ENCODE measurements at regions of chr5 and their contacts with region 1.

Region 1: DNA sequence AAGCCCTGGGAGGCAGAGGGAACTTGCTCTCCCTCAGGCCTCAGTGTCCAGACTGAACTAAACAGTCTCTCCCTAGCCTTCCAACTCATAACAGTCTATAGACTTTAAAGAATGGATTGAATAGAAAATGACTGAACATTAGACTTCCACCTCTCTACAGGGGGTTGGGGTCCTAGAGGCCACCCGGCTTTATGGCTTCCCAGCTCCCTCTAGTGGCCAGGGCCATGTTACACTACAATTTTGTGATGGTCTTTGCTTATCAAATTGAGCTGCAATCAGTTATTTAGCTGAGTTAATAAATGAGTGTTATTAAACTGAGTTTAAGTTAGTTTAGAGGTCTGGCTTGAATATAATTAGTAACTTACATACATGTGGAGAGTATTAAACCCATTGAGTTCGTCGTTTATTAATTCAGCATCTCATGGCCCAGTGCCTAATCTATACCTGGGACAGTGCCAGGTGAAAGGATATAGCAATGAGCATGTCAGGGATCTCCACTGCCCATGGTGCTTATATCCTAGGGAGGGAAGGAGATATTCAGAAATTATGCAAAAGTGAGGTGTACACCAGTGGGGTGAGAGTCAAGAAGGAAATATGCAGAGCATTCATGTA is 105.2 kb downstream of the SH3TC2 start:
- DNase-seq: peak; percentile 76
- H3K4me3 ChIP-seq: no peak overlapping the region
- H3K27ac ChIP-seq: no peak overlapping the region
- H3K4me1 ChIP-seq: no peaks in the 10 kb centered on the region
- CTCF ChIP-seq: peak; percentile 100

Region 2: GRCh38 chr5:148740966-148741742 is 216.5 kb before region 1 on chr5:
- CTCF ChIA-PET with region 1: interaction called, 32 read pairs
- POLR2A ChIA-PET with region 1: interaction called, 7 read pairs
- intact Hi-C with region 1: loop called (anchors 1 kb)
- DNase-seq: peak; percentile 58
- H3K4me3 ChIP-seq: no peak overlapping the region
- H3K27ac ChIP-seq: no peak overlapping the region
- H3K4me1 ChIP-seq: no peaks in the 10 kb centered on the region
- CTCF ChIP-seq: peak; percentile 96

Region 3: DNA sequence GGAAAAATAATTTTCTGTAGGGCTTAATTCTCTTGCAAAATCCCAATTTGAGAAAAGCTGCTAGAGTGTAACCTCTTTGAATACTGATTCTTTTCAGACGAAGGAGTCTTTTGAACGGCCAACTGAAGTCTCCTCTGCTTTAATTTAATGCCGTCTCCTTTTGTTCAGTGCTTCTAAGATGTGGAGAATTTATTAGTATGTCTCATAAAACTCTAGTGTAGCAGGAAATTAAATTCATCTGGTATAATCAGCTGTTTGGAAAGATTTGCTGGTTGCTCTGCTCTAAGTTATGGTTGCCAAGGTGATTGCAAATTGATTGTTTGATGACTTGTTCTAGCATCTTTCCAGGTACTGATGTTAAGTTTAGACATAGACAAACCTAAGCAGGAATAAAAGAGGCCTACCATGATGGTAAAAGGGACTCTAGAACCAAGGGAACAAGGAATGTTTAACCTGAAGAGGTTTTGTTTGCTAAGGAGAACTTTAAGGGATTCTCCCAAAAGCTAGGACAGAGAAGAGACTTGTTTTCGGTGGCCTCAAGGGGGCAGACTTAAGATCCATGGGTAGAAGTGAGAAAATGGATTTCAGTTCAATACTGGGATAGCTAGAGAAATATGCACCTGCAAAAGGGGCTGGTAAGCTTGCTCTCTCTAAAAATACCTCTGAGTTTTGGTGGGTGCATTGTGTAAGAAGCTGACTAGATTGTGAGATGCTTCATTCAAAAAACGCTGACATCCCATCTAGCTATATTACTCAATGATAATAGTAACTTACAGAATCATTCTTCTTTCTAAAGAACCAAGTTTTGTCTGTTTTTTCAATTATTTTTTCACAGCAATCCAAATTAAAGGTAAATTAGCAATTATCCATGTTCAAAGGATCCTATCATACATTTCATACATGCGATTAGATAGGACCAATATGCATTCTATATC is 137.0 kb before region 1 on chr5:
- CTCF ChIA-PET with region 1: no interaction called
- POLR2A ChIA-PET with region 1: no interaction called
- intact Hi-C with region 1: loop called (anchors 2 kb)
- DNase-seq: peak; percentile 44
- H3K4me3 ChIP-seq: no peak overlapping the region
- H3K27ac ChIP-seq: no peak overlapping the region
- H3K4me1 ChIP-seq: peaks cover 66% of the 10 kb centered on the region
- CTCF ChIP-seq: peak; percentile 88

Region 4: DNA sequence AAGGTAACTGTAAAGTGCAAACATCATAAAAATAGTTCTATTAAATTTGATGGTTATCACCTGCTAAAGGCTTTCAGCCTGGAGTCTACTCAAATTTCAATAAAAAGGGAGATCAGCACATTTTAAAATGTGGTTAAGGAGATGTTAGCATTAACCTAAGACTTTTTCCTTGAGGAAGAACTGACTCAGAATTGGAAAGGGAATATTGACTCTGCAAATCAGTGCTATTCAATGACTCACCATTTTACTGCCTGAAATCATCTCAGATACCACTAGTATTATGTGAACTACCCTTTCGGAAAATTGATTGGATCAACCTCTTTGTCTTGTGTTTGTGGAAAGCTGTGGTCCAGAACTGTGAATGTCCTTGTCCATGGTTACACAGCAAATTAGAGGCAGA is 18.0 kb before region 1 on chr5:
- CTCF ChIA-PET with region 1: no interaction called
- POLR2A ChIA-PET with region 1: no interaction called
- intact Hi-C with region 1: no loop called
- DNase-seq: no peak
- H3K4me3 ChIP-seq: no peak overlapping the region
- H3K27ac ChIP-seq: no peak overlapping the region
- H3K4me1 ChIP-seq: no peaks in the 10 kb centered on the region
- CTCF ChIP-seq: no peak

Region 5: GRCh38 chr5:149162401-149163084 is 204.8 kb after region 1 on chr5:
- CTCF ChIA-PET with region 1: no interaction called
- POLR2A ChIA-PET with region 1: no interaction called
- intact Hi-C with region 1: no loop called
- DNase-seq: no peak
- H3K4me3 ChIP-seq: no peak overlapping the region
- H3K27ac ChIP-seq: no peak overlapping the region
- H3K4me1 ChIP-seq: no peaks in the 10 kb centered on the region
- CTCF ChIP-seq: no peak

Measured in OCI-LY7 (cell line).